HAP-1 (cell line): ENCODE measurements at regions of chr1 and their contacts with region 1.

Region 1: GRCh38 chr1:212981571-212982328 is 31.4 kb downstream of the VASH2 start:
- DNase-seq: no peak
- H3K4me3 ChIP-seq: no peak overlapping the region
- H3K4me1 ChIP-seq: no peaks in the 10 kb centered on the region
- H3K27me3 ChIP-seq: no peaks in the 10 kb centered on the region

Region 2: DNA sequence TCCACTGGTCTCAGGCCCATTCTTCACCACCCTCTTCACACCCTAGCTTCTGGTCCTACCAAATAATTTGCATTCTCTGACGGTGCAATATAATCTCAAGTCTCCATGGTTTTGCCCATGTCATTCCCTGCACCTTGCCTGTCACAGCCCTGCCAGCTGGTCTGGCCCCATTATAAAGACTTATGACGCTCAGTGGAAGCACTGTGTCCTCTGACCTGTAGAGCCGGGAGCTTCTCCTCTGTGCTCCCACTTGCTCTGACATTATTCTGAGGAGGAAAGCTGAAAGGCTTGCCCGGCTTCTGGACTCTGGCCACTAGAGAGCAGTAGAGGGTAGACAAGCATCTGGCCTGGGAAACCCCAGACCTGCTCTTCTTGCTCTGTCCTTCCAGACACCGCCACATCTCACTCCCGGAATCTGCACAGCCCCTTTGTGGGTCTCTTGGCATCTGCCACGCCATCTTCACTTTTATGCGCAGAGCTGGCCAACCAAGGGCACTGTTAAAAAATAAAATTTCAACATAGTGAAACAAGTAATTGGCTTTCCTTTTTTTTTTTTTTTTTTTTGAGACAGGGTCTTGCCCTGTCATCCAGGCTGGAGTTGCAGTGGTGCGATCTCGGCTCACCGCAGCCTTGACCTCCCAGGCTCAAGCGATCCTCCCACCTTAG is 504.6 kb before region 1 on chr1:
- in situ Hi-C with region 1: loop called (anchors 25 kb)
- DNase-seq: peak; percentile 83 to 89
- H3K4me3 ChIP-seq: no peak overlapping the region
- H3K4me1 ChIP-seq: no peaks in the 10 kb centered on the region
- H3K27me3 ChIP-seq: no peaks in the 10 kb centered on the region

Region 3: GRCh38 chr1:212930986-212931678 is 50.6 kb before region 1 on chr1:
- in situ Hi-C with region 1: loop called (anchors 5 kb)
- DNase-seq: no peak
- H3K4me3 ChIP-seq: no peak overlapping the region
- H3K4me1 ChIP-seq: peaks cover 21% of the 10 kb centered on the region
- H3K27me3 ChIP-seq: no peaks in the 10 kb centered on the region